Activated CD4-positive, alpha-beta T cell treated with anti-CD3 and anti-CD28 coated beads, Interleukin-2, amount 10 ng/mL, durations not matched to agents 24 days and 14 days (primary cell): ENCODE measurements at regions of chr10 and their contacts with region 1.

Region 1: GRCh38 chr10:11515596-11516430 is 95.6 kb downstream of the USP6NL start:
- DNase-seq: peak; percentile 85
- H3K4me3 Mint-ChIP-seq: no peak overlapping the region
- H3K27ac Mint-ChIP-seq: no peak overlapping the region
- H3K4me1 Mint-ChIP-seq: peaks cover 11% of the 10 kb centered on the region
- H3K27me3 Mint-ChIP-seq: peaks cover 47% of the 10 kb centered on the region

Region 2: DNA sequence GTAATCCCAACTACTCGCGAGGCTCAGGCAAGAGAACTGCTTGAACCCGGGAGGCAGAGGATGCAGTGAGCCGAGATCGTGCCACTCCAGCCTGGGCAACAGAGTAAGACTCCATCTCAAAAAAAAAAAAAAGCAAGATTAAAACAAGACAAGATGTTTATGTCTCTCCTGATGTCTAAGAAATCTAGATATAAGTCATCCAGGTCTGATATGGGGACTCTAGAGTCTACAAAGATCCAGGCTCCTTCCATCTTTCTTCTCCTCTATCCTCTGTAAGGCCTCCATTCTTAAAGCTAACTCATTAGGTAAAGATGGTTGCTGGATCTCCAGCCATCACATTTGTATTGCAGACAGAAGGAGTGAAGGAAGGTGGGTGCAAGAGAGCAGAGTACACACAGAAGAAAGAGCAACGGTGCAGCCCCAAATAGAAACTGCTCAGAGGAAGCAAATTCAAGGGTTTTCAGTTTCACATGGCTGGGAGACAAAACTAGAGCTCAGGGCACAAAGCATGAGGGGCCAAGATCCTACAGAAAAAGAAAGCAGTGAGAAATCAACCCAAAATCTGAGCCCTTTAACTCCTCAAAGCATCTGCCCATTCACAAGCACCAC is 38.1 kb after region 1 on chr10:
- intact Hi-C with region 1: loop called (anchors 2 kb)
- DNase-seq: peak; percentile 69
- H3K4me3 Mint-ChIP-seq: peak overlapping the region; percentile 4
- H3K27ac Mint-ChIP-seq: peak overlapping the region; percentile 43
- H3K4me1 Mint-ChIP-seq: peaks cover 21% of the 10 kb centered on the region
- H3K27me3 Mint-ChIP-seq: peaks cover 19% of the 10 kb centered on the region

Region 3: GRCh38 chr10:11611248-11612020 is 95.6 kb after region 1 on chr10 and contains the start of gene USP6NL:
- intact Hi-C with region 1: loop called (anchors 5 kb)
- DNase-seq: peak; percentile 90
- H3K4me3 Mint-ChIP-seq: peak within 1 kb of the TSS; percentile 85
- H3K27ac Mint-ChIP-seq: peak within 1 kb of the TSS; percentile 72
- H3K4me1 Mint-ChIP-seq: peaks cover 18% of the 10 kb centered on the region
- H3K27me3 Mint-ChIP-seq: peaks cover 57% of the 10 kb centered on the region
- total RNA-seq, gene USP6NL: 0.83 and 0.84 TPM in 2 replicates

Region 4: GRCh38 chr10:11713186-11713743 is 197.5 kb after region 1 on chr10:
- intact Hi-C with region 1: loop called (anchors 1 kb)
- DNase-seq: no peak
- H3K4me3 Mint-ChIP-seq: no peak overlapping the region
- H3K27ac Mint-ChIP-seq: no peak overlapping the region
- H3K4me1 Mint-ChIP-seq: peaks cover 18% of the 10 kb centered on the region
- H3K27me3 Mint-ChIP-seq: peaks cover 71% of the 10 kb centered on the region

Region 5: DNA sequence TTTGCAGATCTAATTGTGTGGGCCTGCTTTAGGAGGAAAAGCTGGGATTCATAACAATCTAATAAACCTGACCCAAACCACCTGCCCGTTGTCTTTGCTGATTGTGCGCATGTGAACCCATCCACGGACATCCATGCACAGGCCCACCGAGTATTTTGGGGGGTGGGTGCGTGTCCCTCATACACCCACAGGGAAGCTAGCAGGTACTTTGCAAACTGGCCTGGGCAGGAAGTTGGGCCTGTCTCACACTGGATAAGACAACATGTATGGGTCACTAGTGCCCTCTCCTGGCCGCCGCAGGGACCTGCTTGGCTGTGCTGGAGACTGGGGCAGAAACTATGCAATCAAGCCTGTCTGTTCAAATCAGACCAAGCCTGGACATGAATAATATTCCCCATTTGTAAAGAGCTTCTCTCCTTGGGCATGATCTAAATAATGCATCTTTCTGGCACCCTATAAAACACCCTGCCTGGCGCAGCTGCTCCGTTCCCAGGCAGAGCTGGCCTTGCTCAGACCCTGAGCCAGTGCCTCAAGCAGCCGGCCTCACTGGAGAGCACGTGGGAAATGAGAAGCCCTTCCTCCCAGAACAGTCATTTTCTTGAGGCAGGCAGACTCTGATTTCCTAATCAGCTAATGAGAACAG is 242.1 kb after region 1 on chr10:
- intact Hi-C with region 1: loop called (anchors 1 kb)
- DNase-seq: peak; percentile 95
- H3K4me3 Mint-ChIP-seq: no peak overlapping the region
- H3K27ac Mint-ChIP-seq: no peak overlapping the region
- H3K4me1 Mint-ChIP-seq: peaks cover 4% of the 10 kb centered on the region
- H3K27me3 Mint-ChIP-seq: peaks cover 20% of the 10 kb centered on the region

Region 6: DNA sequence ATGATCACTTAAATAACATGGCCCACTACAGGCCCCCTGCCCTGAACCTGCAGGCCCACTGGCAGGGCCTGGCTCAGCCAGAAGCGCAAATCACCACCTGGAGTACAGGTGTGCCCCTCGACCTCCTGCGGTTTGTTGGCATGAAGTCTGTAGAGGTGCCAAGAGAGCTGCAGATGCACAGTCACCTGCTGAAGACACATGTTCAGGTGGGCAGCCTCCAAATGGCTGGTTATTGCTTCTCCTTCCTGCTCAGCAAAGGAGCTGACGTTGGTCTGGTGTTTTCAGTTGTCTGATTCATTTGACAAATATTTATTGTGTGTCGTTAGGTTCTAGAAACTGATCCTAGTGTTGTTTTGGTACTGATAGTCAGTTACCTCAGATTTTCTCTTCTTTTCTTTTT is 582.0 kb after region 1 on chr10:
- intact Hi-C with region 1: no loop called
- DNase-seq: no peak
- H3K4me3 Mint-ChIP-seq: no peak overlapping the region
- H3K27ac Mint-ChIP-seq: no peak overlapping the region
- H3K4me1 Mint-ChIP-seq: no peaks in the 10 kb centered on the region
- H3K27me3 Mint-ChIP-seq: no peaks in the 10 kb centered on the region